Sciatic nerve (tissue), 2 donors: ENCODE measurements at regions of chr7 and their contacts with region 1.

Region 1: GRCh38 chr7:137231950-137232349 is 111.6 kb downstream of the PTN start:
- DNase-seq: no peak
- ATAC-seq: no peak

Region 2: DNA sequence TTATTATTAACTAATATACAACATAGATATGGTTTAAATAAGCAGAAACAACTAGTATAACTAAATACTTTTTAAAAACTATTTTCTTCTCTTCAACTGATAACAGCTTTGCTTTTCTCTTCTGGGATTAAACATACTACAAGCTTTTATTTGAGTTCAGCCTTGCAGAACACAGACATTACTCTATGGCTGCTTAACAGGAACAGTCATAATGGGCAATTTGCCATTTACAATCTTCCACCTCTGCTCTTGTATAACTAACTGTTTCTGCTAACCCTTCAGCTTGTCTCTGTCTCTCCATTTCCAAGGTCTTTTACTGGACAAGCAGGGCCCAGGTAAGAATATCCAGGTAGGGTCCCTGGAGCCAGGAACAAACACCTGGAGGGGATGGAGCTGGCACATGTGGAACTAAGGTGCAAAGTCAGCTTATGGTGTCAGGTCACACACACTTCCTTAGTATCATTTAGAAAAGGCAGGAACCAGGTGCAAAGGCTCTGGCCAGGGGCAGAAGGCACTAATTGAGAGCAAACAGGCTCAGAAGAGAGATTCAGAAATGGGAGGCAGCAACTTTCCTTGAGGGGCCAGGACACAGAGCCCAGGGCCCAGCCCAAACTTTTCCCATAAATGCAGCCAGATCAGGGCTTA is 1905.2 kb before region 1 on chr7:
- intact Hi-C with region 1: no loop called
- DNase-seq: no peak
- ATAC-seq: no peak

Region 3: GRCh38 chr7:138584696-138585095 is 1352.7 kb after region 1 on chr7:
- intact Hi-C with region 1: loop called (anchors 5 kb)
- DNase-seq: no peak
- ATAC-seq: no peak